ENCODE measurements at regions of chr11 and their contacts with region 1.

Region 1: GRCh38 chr11:94400839-94401772 is at the start of gene GPR83:
- DNase-seq: peak; percentile 56 to 65
- H3K4me3 ChIP-seq: peak within 1 kb of the TSS; percentile 46
- H3K4me3 Mint-ChIP-seq: peak within 1 kb of the TSS; percentile 72
- H3K27ac Mint-ChIP-seq: peak within 1 kb of the TSS; percentile 0
- H3K4me1 ChIP-seq: peaks cover 6% of the 10 kb centered on the region; the same call in 1 of the 2 replicates
- H3K4me1 Mint-ChIP-seq: peaks cover 18% of the 10 kb centered on the region
- H3K27me3 ChIP-seq: peaks cover 3% of the 10 kb centered on the region
- H3K27me3 Mint-ChIP-seq: peaks cover 19% of the 10 kb centered on the region
- CTCF ChIP-seq: no peak
- total RNA-seq, gene GPR83: 2.7 and 2.8 TPM in 2 replicates

Region 2: GRCh38 chr11:94183886-94184264 is 217.2 kb before region 1 on chr11:
- CTCF ChIA-PET with region 1: interaction called, 3 read pairs
- POLR2A ChIA-PET with region 1: no interaction called
- intact Hi-C with region 1: loop called (anchors 5 kb)
- DNase-seq: peak; percentile 81 to 87
- H3K4me3 ChIP-seq: no peak overlapping the region
- H3K4me3 Mint-ChIP-seq: no peak overlapping the region
- H3K27ac Mint-ChIP-seq: no peak overlapping the region
- H3K4me1 ChIP-seq: no peaks in the 10 kb centered on the region
- H3K4me1 Mint-ChIP-seq: peaks cover 11% of the 10 kb centered on the region
- H3K27me3 ChIP-seq: no peaks in the 10 kb centered on the region
- H3K27me3 Mint-ChIP-seq: no peaks in the 10 kb centered on the region
- CTCF ChIP-seq: peak; percentile 96 to 97

Region 3: DNA sequence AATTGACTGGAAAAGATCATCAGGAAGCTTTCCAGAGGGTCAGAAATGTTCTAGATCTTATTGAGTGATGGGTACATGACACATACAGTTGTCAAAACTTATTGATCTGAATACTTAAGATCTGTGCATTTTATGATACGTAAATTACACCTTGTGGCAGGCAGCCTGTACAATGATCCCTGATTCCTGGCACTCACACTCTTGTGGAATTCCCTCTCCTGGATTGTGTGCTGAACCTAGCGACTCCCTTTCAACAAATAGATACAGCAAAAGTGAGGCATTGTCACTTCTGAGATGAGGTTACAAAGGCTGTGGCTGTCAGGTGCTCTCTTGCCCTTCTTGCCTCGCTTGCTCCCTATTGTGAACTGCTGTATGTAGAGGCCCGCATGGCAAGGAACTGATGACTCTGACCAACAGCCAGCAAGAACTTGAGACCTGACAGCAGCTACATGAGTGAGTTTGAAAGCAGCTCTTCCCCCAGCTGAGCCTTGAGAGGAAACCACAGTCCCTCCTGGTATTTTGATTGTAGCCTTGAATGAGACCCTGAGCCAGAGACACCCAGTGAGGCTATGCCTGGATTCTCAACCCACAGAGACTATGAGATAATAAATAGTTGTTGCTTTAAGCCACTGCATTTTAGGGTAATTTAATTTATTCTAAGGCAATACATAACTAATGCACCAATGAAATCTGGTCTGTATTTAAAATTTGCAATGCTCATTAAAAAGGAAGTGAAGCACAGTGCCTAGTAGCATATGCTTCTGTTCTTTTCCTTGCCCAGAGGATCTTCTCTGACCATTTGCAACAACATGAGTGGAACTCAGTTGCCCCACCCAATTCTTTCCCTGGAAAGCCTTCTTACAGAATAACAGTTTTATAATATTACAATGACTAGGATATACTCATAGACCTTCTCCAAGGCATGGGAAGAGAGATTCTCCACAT is 157.3 kb before region 1 on chr11:
- CTCF ChIA-PET with region 1: no interaction called
- POLR2A ChIA-PET with region 1: no interaction called
- intact Hi-C with region 1: no loop called
- DNase-seq: no peak
- H3K4me3 ChIP-seq: no peak overlapping the region
- H3K4me3 Mint-ChIP-seq: no peak overlapping the region
- H3K27ac Mint-ChIP-seq: no peak overlapping the region
- H3K4me1 ChIP-seq: no peaks in the 10 kb centered on the region
- H3K4me1 Mint-ChIP-seq: no peaks in the 10 kb centered on the region
- H3K27me3 ChIP-seq: no peaks in the 10 kb centered on the region
- H3K27me3 Mint-ChIP-seq: peaks cover 9% of the 10 kb centered on the region
- CTCF ChIP-seq: no peak

Region 4: DNA sequence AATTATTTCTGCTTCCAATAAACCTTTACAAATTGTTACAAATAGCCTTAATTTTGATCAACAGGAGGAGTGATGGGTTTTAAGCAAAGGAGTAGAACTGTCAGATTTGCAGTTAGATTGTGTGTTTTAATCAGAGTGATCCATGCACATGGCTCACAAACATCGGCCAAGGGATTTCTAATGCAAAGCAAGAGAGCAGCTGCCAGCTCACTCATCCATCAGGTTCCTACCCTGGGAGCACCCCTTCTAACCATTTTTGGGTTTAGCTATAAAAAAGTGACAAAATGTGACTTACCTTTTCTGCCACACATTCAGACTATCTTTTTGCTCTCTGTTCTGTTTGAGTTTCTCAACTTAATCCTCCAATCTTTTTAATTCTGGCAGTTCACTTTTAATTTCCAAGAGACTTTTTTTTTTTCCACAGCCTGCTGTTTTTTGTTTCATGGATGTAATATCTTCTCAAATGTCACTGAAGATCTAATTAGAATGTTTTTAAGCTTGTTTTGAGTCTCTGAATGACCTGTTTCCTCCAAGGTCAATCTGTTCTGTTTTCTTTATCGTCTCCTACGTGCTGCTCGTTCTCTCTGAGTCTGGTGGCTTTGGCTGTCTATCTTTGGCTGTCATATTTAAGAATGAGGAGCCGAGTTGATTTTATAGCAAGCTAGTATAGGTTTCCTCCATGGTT is 90.8 kb before region 1 on chr11:
- CTCF ChIA-PET with region 1: no interaction called
- POLR2A ChIA-PET with region 1: no interaction called
- intact Hi-C with region 1: loop called (anchors 5 kb)
- DNase-seq: no peak
- H3K4me3 ChIP-seq: no peak overlapping the region
- H3K4me3 Mint-ChIP-seq: no peak overlapping the region
- H3K27ac Mint-ChIP-seq: no peak overlapping the region
- H3K4me1 ChIP-seq: peaks cover 40% of the 10 kb centered on the region
- H3K4me1 Mint-ChIP-seq: peaks cover 36% of the 10 kb centered on the region
- H3K27me3 ChIP-seq: no peaks in the 10 kb centered on the region
- H3K27me3 Mint-ChIP-seq: no peaks in the 10 kb centered on the region
- CTCF ChIP-seq: no peak

Region 5: GRCh38 chr11:95016139-95016538 is 615.0 kb after region 1 on chr11:
- CTCF ChIA-PET with region 1: no interaction called
- POLR2A ChIA-PET with region 1: no interaction called
- intact Hi-C with region 1: no loop called
- DNase-seq: peak in 1 of 2 experiments; percentile 35
- H3K4me3 ChIP-seq: no peak overlapping the region
- H3K4me3 Mint-ChIP-seq: no peak overlapping the region
- H3K27ac Mint-ChIP-seq: no peak overlapping the region
- H3K4me1 ChIP-seq: peaks cover 3% of the 10 kb centered on the region; the same call in 1 of the 2 replicates
- H3K4me1 Mint-ChIP-seq: peaks cover 6% of the 10 kb centered on the region
- H3K27me3 ChIP-seq: no peaks in the 10 kb centered on the region
- H3K27me3 Mint-ChIP-seq: no peaks in the 10 kb centered on the region
- CTCF ChIP-seq: no peak